Natural killer cell (primary cell): ENCODE measurements at regions of chr18 and their contacts with region 1.

Region 1: DNA sequence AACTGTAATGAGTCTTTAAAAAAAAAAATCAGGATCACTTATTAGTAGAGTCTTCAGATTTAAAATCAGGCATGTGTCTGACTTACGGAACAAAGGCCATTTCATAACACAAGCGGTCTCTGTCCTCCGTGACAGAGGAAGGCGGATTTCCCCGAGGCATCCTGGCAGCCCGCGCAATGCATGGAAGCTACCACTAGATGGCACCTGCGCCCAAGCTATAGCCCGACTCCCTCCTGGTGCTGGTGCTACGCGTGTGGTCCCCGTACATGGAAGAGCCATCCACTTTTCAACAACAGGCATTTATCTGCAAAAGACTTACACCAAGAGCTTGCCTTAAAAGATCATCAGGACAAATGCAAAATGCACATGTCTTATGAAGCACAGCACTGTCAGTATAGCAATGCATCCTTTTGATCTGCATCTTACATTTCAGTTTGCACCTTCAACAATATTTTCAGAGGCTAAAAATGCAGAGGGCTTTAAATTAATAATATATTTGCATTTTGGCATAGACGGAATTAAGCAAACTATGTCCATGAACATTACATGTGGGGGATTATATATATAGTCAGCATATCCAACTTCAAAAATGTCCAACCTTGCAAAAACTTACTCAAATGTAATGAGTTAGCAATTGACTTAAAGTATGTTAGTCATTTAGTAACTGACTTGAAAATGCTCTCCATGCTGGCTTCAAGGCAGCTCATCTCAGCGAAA is 96.0 kb downstream of the ZNF516 start:
- DNase-seq: peak; percentile 80 to 86
- ATAC-seq: peak; percentile 89 to 98 (median 96)
- H3K4me3 ChIP-seq: no peak overlapping the region
- H3K4me3 Mint-ChIP-seq: no peak overlapping the region
- H3K27ac ChIP-seq: no peak overlapping the region
- H3K27ac Mint-ChIP-seq: no peak overlapping the region
- H3K4me1 ChIP-seq: peaks cover 11% of the 10 kb centered on the region
- H3K4me1 Mint-ChIP-seq: peaks cover 31 to 51% of the 10 kb centered on the region in 2 donors
- H3K27me3 ChIP-seq: no peaks in the 10 kb centered on the region
- H3K27me3 Mint-ChIP-seq: no peaks in the 10 kb centered on the region
- CTCF ChIP-seq: peak; percentile 96

Region 2: GRCh38 chr18:75958683-75959082 is 440.4 kb before region 1 on chr18:
- intact Hi-C with region 1: no loop called
- DNase-seq: no peak
- ATAC-seq: no peak
- H3K4me3 ChIP-seq: no peak overlapping the region
- H3K4me3 Mint-ChIP-seq: no peak overlapping the region
- H3K27ac ChIP-seq: no peak overlapping the region
- H3K27ac Mint-ChIP-seq: no peak overlapping the region
- H3K4me1 ChIP-seq: no peaks in the 10 kb centered on the region
- H3K4me1 Mint-ChIP-seq: no peaks in the 10 kb centered on the region
- H3K27me3 ChIP-seq: no peaks in the 10 kb centered on the region
- H3K27me3 Mint-ChIP-seq: no peaks in the 10 kb centered on the region
- CTCF ChIP-seq: no peak

Region 3: GRCh38 chr18:76620321-76621170 is 221.5 kb after region 1 on chr18:
- intact Hi-C with region 1: loop called (anchors 1 kb)
- DNase-seq: peak; percentile 27 to 37
- ATAC-seq: peak; percentile 50 to 74 (median 58)
- H3K4me3 ChIP-seq: no peak overlapping the region
- H3K4me3 Mint-ChIP-seq: peak overlapping the region; percentile 50
- H3K27ac ChIP-seq: no peak overlapping the region
- H3K27ac Mint-ChIP-seq: no peak overlapping the region
- H3K4me1 ChIP-seq: peaks cover 8% of the 10 kb centered on the region
- H3K4me1 Mint-ChIP-seq: peaks cover 4 to 9% of the 10 kb centered on the region in 2 donors
- H3K27me3 ChIP-seq: no peaks in the 10 kb centered on the region
- H3K27me3 Mint-ChIP-seq: peaks cover 14 to 32% of the 10 kb centered on the region in 2 donors
- CTCF ChIP-seq: peak; percentile 9

Region 4: GRCh38 chr18:76709659-76710645 is 310.9 kb after region 1 on chr18:
- intact Hi-C with region 1: loop called (anchors 1 kb)
- DNase-seq: peak; percentile 51 to 81
- ATAC-seq: peak; percentile 81 to 99 (median 95)
- H3K4me3 ChIP-seq: no peak overlapping the region
- H3K4me3 Mint-ChIP-seq: no peak overlapping the region
- H3K27ac ChIP-seq: no peak overlapping the region
- H3K27ac Mint-ChIP-seq: no peak overlapping the region
- H3K4me1 ChIP-seq: peaks cover 9% of the 10 kb centered on the region
- H3K4me1 Mint-ChIP-seq: no peaks in the 10 kb centered on the region
- H3K27me3 ChIP-seq: no peaks in the 10 kb centered on the region
- H3K27me3 Mint-ChIP-seq: no peaks in the 10 kb centered on the region
- CTCF ChIP-seq: peak; percentile 92